ENCODE measurements at regions of chr17 and their contacts with region 1.

Region 1: DNA sequence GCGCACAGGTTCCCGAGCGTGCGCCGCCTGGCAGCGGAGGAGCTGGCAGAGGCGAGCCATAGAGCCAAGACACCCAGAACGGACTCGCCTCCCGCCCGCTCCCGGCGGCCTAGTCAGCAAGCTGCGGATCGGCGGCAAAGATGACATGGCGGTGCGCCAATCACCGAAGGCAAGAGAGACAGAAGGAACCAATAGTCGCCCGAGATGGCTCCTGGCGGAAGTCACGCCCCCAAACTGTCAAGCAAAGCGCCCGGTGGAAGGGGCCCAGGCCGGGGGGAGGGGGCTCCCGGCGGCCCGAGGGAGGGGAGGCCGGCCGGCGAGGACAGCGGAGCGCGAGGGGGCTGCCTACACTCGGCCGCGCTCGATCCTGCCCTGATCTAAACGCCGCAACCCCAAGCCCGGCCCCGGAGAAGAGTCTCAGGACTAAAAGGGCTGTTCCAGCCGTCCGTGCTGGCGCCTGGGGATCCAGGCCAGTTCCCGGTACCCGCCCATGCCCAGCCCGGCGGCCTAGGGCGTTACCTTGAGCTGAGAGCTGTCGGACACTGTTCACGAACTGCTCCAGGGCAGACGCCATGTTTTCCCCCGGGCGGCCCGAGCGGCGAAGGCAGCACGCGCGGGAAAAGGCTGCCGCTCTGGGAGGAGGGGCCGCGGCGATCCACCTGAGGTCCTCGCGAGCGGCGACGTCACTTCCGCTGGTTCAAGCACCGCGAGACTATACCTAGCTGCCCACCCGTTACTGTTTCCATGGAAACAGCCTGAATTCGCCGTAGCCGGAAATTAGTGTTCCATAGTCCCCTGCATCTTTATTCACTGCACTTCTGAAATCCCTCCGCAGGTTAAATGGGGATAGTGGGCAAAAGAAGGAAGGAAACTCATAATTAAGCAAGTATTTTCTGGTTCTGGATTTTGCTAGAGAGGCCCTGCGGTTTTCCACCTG is at the start of gene COPS3:
- DNase-seq: peak; percentile 91 to 99 (median 97)
- ATAC-seq: peak; percentile 88
- H3K4me3 ChIP-seq: peak within 1 kb of the TSS; percentile 74 to 93
- H3K4me3 Mint-ChIP-seq: peak within 1 kb of the TSS; percentile 96
- H3K27ac ChIP-seq: peak within 1 kb of the TSS; percentile 74 to 92
- H3K27ac Mint-ChIP-seq: peak within 1 kb of the TSS; percentile 87
- H3K4me1 ChIP-seq: peaks cover 26% of the 10 kb centered on the region
- H3K4me1 Mint-ChIP-seq: peaks cover 38% of the 10 kb centered on the region
- H3K27me3 ChIP-seq: no peaks in the 10 kb centered on the region
- H3K27me3 Mint-ChIP-seq: no peaks in the 10 kb centered on the region
- CTCF ChIP-seq: no peak
- total RNA-seq, gene COPS3: 94.1 to 96.3 TPM

Region 2: DNA sequence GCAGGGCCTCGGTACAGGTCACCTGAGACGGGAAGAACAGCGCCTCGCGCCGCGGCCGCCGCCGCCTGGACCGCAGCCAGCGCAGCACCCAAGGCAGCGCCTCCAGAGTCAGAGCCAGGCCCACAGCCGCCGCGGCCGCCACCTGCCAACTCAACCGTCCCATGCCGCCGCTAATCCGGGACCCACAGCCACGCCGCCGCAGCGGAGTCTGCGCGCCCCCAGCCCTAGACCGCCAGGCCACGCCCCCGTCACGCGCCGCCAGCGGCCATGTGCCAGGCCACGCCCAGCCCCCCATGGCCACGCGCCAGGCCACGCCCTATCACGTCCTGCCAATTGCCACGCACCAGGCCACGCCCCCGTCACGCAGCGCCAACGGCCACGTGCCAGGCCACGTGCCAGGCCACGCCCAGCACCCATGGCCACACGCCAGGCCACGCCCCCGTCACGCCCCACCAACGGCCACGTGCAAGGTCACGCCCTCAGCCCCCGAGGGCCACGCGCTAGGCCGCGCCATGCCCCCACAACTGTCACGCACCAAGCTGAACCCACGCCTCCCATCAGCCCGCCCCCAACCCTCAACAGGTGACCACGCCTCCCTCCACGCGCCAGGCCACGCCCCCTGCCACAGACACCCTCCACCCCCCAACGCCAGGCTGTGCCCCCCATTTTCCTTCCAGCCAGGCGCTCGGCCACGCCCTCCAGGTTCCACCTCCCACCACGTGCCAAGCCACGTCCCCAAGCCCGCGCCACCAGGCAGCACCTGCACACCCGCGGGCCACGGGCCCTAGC is 74.6 kb before region 1 on chr17 and contains the start of gene PLD6:
- CTCF ChIA-PET with region 1: no interaction called
- POLR2A ChIA-PET with region 1: no interaction called
- intact Hi-C with region 1: loop called (anchors 1 kb)
- DNase-seq: peak; percentile 72 to 96 (median 94)
- ATAC-seq: peak; percentile 79
- H3K4me3 ChIP-seq: peak within 1 kb of the TSS; percentile 48 to 75
- H3K4me3 Mint-ChIP-seq: peak within 1 kb of the TSS; percentile 86
- H3K27ac ChIP-seq: peak within 1 kb of the TSS; percentile 41 to 59
- H3K27ac Mint-ChIP-seq: peak within 1 kb of the TSS; percentile 92
- H3K4me1 ChIP-seq: peaks cover 21% of the 10 kb centered on the region
- H3K4me1 Mint-ChIP-seq: peaks cover 29% of the 10 kb centered on the region
- H3K27me3 ChIP-seq: no peaks in the 10 kb centered on the region
- H3K27me3 Mint-ChIP-seq: no peaks in the 10 kb centered on the region
- CTCF ChIP-seq: no peak
- total RNA-seq, gene PLD6: 3.2 to 3.3 TPM

Region 3: GRCh38 chr17:17303010-17303846 is 22.3 kb after region 1 on chr17 and contains the start of gene NT5M:
- CTCF ChIA-PET with region 1: no interaction called
- POLR2A ChIA-PET with region 1: interaction called, 5 read pairs
- intact Hi-C with region 1: loop called (anchors 1 kb)
- DNase-seq: peak in 8 of 9 experiments; percentile 52 to 82 (median 68)
- ATAC-seq: peak; percentile 54
- H3K4me3 ChIP-seq: peak within 1 kb of the TSS; percentile 44 to 54
- H3K4me3 Mint-ChIP-seq: peak within 1 kb of the TSS; percentile 90
- H3K27ac ChIP-seq: peak within 1 kb of the TSS; percentile 6 to 61
- H3K27ac Mint-ChIP-seq: peak within 1 kb of the TSS; percentile 88
- H3K4me1 ChIP-seq: peaks cover 38% of the 10 kb centered on the region
- H3K4me1 Mint-ChIP-seq: peaks cover 29% of the 10 kb centered on the region
- H3K27me3 ChIP-seq: peaks cover 0 to 4% of the 10 kb centered on the region in 2 experiments
- H3K27me3 Mint-ChIP-seq: peaks cover 2% of the 10 kb centered on the region
- CTCF ChIP-seq: no peak
- total RNA-seq, gene NT5M: 2.2 to 2.4 TPM

Region 4: GRCh38 chr17:17313350-17313991 is 32.6 kb after region 1 on chr17:
- CTCF ChIA-PET with region 1: interaction called, 4 read pairs
- POLR2A ChIA-PET with region 1: no interaction called
- intact Hi-C with region 1: loop called in 1 of 2 experiments (anchors 1 kb)
- DNase-seq: peak; percentile 45 to 85 (median 75)
- ATAC-seq: peak; percentile 100
- H3K4me3 ChIP-seq: no peak overlapping the region
- H3K4me3 Mint-ChIP-seq: no peak overlapping the region
- H3K27ac ChIP-seq: no peak overlapping the region
- H3K27ac Mint-ChIP-seq: no peak overlapping the region
- H3K4me1 ChIP-seq: peaks cover 4% of the 10 kb centered on the region
- H3K4me1 Mint-ChIP-seq: peaks cover 5% of the 10 kb centered on the region
- H3K27me3 ChIP-seq: no peaks in the 10 kb centered on the region
- H3K27me3 Mint-ChIP-seq: no peaks in the 10 kb centered on the region
- CTCF ChIP-seq: peak; percentile 81

Region 5: GRCh38 chr17:17535957-17536356 is 255.1 kb after region 1 on chr17:
- CTCF ChIA-PET with region 1: no interaction called
- POLR2A ChIA-PET with region 1: no interaction called
- intact Hi-C with region 1: no loop called
- DNase-seq: no peak
- ATAC-seq: no peak
- H3K4me3 ChIP-seq: no peak overlapping the region
- H3K4me3 Mint-ChIP-seq: no peak overlapping the region
- H3K27ac ChIP-seq: no peak overlapping the region
- H3K27ac Mint-ChIP-seq: no peak overlapping the region
- H3K4me1 ChIP-seq: no peaks in the 10 kb centered on the region
- H3K4me1 Mint-ChIP-seq: no peaks in the 10 kb centered on the region
- H3K27me3 ChIP-seq: no peaks in the 10 kb centered on the region
- H3K27me3 Mint-ChIP-seq: no peaks in the 10 kb centered on the region
- CTCF ChIP-seq: no peak

Region 6: GRCh38 chr17:18038861-18039534 is 758.1 kb after region 1 on chr17 and contains the starts of genes ATPAF2 and GID4:
- CTCF ChIA-PET with region 1: no interaction called
- POLR2A ChIA-PET with region 1: no interaction called
- intact Hi-C with region 1: loop called in 1 of 2 experiments (anchors 2 kb)
- DNase-seq: peak; percentile 99 to 100 (median 100)
- ATAC-seq: peak; percentile 90
- H3K4me3 ChIP-seq: peak within 1 kb of the TSS; percentile 85 to 92
- H3K4me3 Mint-ChIP-seq: peak within 1 kb of the TSS; percentile 92
- H3K27ac ChIP-seq: peak within 1 kb of the TSS; percentile 63 to 84
- H3K27ac Mint-ChIP-seq: peak within 1 kb of the TSS; percentile 91
- H3K4me1 ChIP-seq: peaks cover 34% of the 10 kb centered on the region
- H3K4me1 Mint-ChIP-seq: peaks cover 56% of the 10 kb centered on the region
- H3K27me3 ChIP-seq: no peaks in the 10 kb centered on the region
- H3K27me3 Mint-ChIP-seq: no peaks in the 10 kb centered on the region
- CTCF ChIP-seq: no peak
- total RNA-seq, gene ATPAF2: 16.8 to 24.5 TPM
- total RNA-seq, gene GID4: 2.7 to 5.0 TPM

Region 7: GRCh38 chr17:18087610-18088491 is 807.0 kb after region 1 on chr17 and contains the start of gene DRG2:
- CTCF ChIA-PET with region 1: no interaction called
- POLR2A ChIA-PET with region 1: no interaction called
- intact Hi-C with region 1: loop called in 1 of 2 experiments (anchors 5 kb)
- DNase-seq: peak; percentile 79 to 94 (median 88)
- ATAC-seq: peak; percentile 91
- H3K4me3 ChIP-seq: peak within 1 kb of the TSS; percentile 80 to 90
- H3K4me3 Mint-ChIP-seq: peak within 1 kb of the TSS; percentile 99
- H3K27ac ChIP-seq: peak within 1 kb of the TSS; percentile 78 to 87
- H3K27ac Mint-ChIP-seq: peak within 1 kb of the TSS; percentile 98
- H3K4me1 ChIP-seq: peaks cover 15% of the 10 kb centered on the region
- H3K4me1 Mint-ChIP-seq: peaks cover 33% of the 10 kb centered on the region
- H3K27me3 ChIP-seq: no peaks in the 10 kb centered on the region
- H3K27me3 Mint-ChIP-seq: no peaks in the 10 kb centered on the region
- CTCF ChIP-seq: no peak
- total RNA-seq, gene DRG2: 45.4 to 46.3 TPM

Measured in CD8-positive, alpha-beta T cell (primary cell).